GM10248 (cell line): ENCODE measurements at regions of chr15 and their contacts with region 1.

Region 1: DNA sequence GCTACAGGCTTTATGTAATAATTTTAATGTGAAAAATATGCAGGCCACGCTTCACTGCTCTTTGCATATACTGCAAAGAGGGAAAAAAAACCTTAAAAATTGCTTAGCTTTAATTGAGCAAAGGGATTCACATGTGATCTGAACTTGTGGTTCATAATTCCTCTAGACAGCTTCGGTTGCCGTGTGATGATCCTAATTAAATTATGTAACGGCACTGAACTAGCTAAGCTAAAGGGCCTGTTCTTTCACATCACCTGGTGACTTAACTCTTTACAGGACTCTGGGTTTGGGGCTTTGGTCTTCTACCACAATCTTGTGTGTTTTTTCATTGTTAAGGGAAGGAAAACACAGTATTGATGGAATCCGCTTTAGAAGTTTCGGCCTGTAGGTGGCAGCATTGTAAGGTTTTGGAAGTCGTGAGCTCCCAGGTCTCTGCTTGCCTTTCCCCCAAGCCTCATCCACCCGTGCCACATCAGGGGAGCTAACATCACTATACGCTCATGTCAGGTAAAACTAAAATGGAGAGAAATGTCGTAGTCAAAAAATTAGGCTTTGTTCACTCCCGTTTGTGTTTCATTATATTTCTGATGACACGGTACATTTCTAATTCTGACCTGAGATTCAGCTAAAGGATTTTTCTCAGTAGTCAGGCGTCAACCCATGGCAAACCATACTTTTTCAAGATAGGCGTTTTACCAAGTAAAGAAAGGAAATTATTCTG is 205.6 kb upstream of the DPH6 start:
- DNase-seq: peak; percentile 28
- CTCF ChIP-seq: peak; percentile 68

Region 2: GRCh38 chr15:35740761-35741160 is 10.8 kb before region 1 on chr15:
- CTCF ChIA-PET with region 1: interaction called, 31 read pairs
- POLR2A ChIA-PET with region 1: no interaction called
- DNase-seq: no peak
- CTCF ChIP-seq: no peak

Region 3: DNA sequence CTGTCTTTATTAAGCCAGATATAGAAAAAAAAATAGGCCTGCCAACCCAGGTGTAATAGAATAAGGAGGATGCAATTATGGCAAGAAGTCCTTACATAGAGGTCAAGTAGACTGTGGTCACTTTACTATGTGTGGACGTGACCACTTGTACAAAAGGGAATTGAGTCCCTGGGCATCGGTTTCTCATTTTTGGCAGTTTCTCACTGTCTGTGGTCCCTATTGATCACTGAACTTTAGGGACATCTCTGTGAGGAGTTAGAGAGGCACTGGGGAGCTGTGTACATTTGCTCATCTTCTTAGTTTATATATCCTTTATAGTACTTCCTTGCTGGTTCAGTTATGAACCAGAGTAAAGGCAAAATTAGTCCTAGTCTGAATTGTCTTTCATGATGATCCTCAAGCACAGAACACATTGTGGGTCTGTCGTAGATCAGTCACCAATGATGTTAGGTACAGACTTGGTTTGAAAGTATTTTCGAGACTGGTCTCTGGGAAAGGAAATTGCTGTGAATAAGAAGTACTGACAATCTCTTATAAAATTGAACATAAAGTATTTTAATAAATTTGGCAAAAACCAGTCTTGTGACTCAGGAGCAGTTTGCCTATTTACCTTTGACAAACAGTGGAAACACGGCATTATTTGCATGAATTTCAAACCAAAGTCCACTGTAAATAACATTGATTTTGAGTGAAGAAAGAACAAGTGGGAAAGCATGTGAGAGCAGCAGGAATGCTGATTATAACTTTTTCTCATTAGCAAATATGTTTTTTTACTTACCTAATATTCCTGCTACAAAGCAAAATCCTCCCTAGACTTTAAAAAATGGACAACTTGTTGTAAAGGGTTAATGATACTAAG is 13.3 kb after region 1 on chr15:
- CTCF ChIA-PET with region 1: interaction called, 14 read pairs
- POLR2A ChIA-PET with region 1: no interaction called
- DNase-seq: no peak
- CTCF ChIP-seq: no peak

Region 4: DNA sequence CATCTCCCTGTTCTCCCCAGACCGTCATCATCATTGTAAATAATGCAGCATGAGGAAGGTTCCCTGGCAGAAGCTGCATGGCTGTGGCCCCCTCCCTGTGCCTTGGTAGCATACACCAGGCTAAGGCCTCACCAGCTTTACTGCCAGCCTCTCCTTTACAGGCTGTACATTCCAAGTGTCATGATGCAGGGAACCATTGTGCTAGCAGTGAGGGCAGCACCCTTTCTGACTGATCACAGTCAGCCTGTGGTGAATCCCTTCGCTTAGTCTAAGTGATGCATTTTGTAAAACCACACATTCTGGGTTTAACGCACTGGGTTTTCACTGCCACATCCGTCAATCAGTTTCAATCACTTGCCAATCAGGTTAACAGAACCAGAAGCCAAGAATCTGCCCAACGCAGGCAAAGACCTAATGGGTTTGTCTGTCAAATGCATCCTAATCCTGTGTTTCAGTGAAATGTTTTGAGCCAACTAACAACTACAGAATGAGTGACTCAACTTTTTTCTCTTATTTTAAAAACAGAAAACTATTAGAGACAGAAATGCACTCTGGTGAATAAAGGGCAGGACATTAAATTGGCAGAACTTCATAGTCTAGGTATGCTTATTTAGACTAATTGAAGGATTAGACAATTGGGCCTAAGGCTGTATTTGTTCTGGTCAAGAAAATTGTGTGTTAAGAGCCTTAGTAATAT is 20.3 kb after region 1 on chr15:
- CTCF ChIA-PET with region 1: interaction called, 11 read pairs
- POLR2A ChIA-PET with region 1: no interaction called
- DNase-seq: no peak
- CTCF ChIP-seq: no peak

Region 5: GRCh38 chr15:36896949-36897348 is 1145.4 kb after region 1 on chr15:
- CTCF ChIA-PET with region 1: no interaction called
- POLR2A ChIA-PET with region 1: no interaction called
- DNase-seq: no peak
- CTCF ChIP-seq: no peak